Lower leg skin (tissue), 4 donors: ENCODE measurements at regions of chr17 and their contacts with region 1.

Region 1: DNA sequence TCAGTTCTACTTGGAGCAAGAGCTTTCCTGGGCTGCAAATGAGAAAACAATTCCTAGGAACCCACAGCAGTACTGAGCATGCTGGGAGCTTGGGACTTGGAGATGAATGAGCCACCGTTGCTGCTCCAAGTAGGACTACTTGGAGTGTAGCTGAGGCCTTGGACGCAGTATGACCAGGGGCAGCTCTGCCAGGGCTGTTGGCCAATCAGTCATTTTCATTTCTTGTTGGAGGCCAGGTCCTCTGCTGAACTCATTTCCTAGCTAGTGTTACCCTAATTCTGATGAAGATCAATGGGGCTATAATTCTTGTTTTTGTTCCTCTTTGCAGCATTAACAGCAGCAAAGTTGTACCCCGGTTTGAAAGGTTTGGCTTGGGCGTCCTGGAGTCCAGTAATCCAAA is 8.0 kb upstream of the LGALS9 start:
- DNase-seq: no peak
- H3K4me3 ChIP-seq: no peak overlapping the region
- CTCF ChIP-seq: no peak
- POLR2A ChIP-seq: no peak

Region 2: DNA sequence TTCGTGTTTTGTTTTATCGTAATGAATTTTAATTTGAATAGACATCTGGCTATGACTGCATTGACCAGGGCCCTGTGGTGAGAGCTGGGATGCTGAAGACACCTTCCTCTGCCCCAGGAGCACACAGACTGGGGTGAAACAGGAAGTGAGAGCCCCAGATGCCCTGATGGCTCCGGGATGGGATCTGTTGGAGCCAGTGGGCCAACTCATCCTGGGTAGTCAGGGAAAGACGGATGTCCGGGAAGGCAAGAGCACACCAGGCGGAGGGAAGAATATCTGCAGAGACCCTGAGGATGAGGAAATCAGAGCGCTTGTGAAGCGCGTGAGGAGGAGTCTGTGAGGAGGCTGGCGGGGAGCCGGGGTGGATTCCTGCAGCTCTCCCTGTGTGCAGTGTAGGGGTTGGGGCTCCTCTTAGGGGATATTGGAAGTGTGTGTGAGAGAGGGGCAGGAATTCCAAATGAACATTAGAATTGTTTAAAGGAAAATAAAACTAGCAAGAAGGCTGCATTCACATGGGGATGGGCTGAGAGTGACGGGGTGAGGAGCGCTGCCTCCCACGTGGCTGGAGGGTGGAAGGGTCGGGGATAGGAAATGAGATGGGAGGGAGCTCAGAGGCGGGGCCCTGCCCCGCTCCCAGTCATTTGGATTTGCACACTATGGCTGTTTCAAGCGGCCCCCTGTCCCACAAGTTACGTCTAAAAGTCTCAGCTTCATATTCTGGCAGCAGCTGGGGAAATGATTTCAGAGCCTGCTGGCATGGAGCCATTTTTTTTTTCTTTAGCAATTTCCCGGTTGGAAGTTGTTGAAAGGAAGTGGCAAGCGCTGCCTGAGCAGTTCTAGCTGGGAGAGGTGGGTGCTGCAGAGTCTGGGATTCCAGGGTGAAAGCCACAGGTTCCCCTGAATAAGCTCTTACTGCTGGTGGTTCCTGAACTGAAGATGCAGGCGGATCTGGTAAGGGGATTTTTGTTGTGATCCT is 63.2 kb before region 1 on chr17:
- intact Hi-C with region 1: no loop called
- DNase-seq: peak; percentile 39 to 91
- H3K4me3 ChIP-seq: no peak overlapping the region
- CTCF ChIP-seq: no peak
- POLR2A ChIP-seq: no peak

Region 3: DNA sequence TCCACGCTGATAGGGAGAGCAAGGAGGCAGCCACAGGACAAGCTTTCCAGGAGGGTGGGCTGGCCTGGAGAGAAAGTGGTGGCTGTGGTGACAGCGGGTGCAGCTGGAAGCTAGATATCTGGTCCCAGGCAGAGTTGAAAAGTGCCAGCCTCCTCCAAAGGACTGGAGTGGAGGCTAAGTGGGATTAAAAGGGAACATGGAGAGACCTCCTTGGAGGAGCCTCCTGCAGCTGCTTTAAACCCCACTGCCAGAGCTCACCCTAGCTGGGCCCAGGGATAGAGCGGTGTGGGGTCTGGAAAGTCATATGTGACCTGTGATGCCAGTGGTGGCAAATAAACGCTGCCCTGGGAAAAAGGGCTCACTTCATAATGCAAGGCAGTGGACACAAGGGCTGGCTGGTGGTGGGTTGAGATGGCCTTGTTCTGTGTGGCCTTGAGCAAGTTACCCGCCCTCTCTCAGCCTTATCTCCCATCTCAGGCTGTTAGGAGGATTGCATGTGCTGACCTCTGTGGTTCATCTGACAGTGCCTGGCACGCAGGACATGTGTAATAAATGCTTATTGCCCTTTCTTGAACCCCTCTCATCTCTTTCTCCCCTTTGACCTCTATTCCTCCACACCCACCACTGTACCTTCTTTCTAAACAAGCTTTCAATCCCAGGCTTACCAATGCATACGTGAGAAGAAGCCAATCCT is 53.0 kb before region 1 on chr17:
- intact Hi-C with region 1: no loop called
- DNase-seq: no peak
- H3K4me3 ChIP-seq: no peak overlapping the region
- CTCF ChIP-seq: no peak
- POLR2A ChIP-seq: no peak

Region 4: DNA sequence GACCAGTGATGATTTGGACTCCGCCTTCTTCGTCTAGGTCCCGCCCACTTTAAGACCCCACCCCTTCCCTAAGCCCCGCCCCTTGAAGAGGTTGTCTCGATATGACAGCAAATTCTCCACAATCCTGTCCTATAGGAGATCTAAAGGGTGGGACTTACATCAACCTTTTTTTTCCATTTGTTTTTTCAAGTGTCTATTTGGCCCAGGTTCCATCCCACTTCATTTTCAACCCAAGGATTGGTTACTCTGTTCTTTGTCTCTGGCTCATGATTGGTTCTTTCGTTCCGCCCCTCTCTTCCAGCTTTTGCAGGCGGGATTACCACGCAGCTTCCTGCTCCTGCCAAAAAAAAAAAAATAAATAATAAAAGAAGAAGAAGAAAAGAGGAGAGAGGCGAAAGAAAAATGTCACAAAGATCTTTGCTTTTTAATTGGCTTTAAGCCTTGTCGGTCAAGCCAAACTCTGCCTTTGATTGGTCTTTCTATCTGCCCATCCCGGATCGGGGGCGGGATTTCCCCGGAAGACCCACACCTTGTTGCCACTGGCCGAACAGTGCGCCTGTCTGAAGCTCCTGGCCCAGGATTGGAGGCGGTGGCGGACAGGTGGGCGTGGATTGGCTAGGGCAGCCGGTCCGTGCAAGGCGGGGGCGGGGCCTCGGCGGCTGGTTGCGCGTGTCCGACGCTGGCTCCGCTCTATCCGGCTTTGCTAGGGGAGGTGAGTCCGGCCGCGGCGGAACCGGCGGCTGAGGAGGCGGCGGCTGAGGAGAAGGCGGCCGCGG is 418.3 kb after region 1 on chr17:
- intact Hi-C with region 1: loop called (anchors 10 kb)
- DNase-seq: peak; percentile 99 to 100
- H3K4me3 ChIP-seq: peak overlapping the region; percentile 71
- CTCF ChIP-seq: peak in 1 of 3 donors; percentile 51
- POLR2A ChIP-seq: no peak